Naive thymus-derived CD4-positive, alpha-beta T cell (primary cell): ENCODE measurements at regions of chr4 and their contacts with region 1.

Region 1: DNA sequence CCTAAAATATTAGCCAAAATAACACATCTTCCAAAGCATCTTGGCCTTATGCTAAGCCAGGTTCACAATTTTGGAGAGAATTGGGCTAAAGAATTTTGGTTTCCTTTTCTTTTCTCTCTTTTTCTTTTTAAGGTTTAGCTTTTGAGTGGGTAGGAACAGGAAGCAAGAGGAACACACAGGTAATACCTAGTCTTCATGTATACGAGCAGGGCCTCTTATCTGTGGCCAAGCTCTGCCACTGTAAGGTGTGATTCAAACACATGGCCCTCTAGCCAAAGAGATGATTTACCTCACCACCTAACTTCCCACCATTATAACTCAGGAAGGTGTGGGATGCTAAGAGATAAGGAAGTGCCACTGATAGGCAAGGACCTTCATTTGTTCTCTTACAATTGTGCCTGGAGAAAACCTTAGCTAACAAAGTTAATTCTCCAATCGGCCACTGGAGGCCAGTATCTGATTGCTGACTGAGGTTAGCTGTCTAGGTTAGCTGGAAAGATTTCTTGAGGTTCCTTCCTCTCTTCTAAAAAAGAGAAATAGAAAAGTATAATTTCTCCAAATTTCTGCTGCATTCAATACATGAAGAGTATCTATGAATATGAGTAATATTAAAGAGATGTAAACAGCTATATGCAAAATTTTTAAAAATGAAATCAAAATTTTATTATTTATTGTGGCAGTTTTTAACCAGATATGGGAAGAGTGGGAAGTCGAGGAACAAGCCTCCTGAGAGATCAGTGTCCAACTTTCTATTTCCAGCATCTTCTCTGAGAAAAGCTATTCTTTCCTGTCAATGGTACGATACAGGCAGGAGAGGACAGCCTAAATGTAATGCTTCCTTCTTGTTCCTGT is 30.1 kb upstream of the BBS7 start:
- DNase-seq: peak in 8 of 9 donors; percentile 33 to 59 (median 54)
- ATAC-seq: peak; percentile 87
- H3K4me3 ChIP-seq: no peak overlapping the region
- H3K4me3 Mint-ChIP-seq: no peak overlapping the region
- H3K27ac ChIP-seq: no peak overlapping the region
- H3K27ac Mint-ChIP-seq: peak overlapping the region in 6 of 9 donors; percentile 1 to 84 (median 57)
- H3K4me1 ChIP-seq: peaks cover 0 to 3% of the 10 kb centered on the region in 2 donors
- H3K4me1 Mint-ChIP-seq: peaks cover 0 to 16% (median 9%) of the 10 kb centered on the region in 7 donors
- H3K27me3 ChIP-seq: no peaks in the 10 kb centered on the region
- H3K27me3 Mint-ChIP-seq: peaks cover 11 to 24% (median 13%) of the 10 kb centered on the region in 5 donors

Region 2: GRCh38 chr4:121869841-121870656 is 30.3 kb before region 1 on chr4 and contains the start of gene BBS7:
- CTCF ChIA-PET with region 1: interaction called, 5 read pairs
- POLR2A ChIA-PET with region 1: interaction called, 3 read pairs
- intact Hi-C with region 1: loop called in 1 of 2 experiments (anchors 2 kb)
- DNase-seq: peak; percentile 79 to 93 (median 89)
- ATAC-seq: peak; percentile 98
- H3K4me3 ChIP-seq: peak within 1 kb of the TSS; percentile 99
- H3K4me3 Mint-ChIP-seq: peak within 1 kb of the TSS; percentile 88 to 98 (median 97)
- H3K27ac ChIP-seq: peak within 1 kb of the TSS; percentile 77
- H3K27ac Mint-ChIP-seq: peak within 1 kb of the TSS; percentile 69 to 95 (median 90)
- H3K4me1 ChIP-seq: peaks cover 0 to 10% of the 10 kb centered on the region in 2 donors
- H3K4me1 Mint-ChIP-seq: peaks cover 9 to 17% (median 15%) of the 10 kb centered on the region in 7 donors
- H3K27me3 ChIP-seq: no peaks in the 10 kb centered on the region
- H3K27me3 Mint-ChIP-seq: peaks cover 0 to 30% (median 12%) of the 10 kb centered on the region in 5 donors
- total RNA-seq, gene BBS7: 3.7 to 13.1 (median 8.1) TPM

Region 3: DNA sequence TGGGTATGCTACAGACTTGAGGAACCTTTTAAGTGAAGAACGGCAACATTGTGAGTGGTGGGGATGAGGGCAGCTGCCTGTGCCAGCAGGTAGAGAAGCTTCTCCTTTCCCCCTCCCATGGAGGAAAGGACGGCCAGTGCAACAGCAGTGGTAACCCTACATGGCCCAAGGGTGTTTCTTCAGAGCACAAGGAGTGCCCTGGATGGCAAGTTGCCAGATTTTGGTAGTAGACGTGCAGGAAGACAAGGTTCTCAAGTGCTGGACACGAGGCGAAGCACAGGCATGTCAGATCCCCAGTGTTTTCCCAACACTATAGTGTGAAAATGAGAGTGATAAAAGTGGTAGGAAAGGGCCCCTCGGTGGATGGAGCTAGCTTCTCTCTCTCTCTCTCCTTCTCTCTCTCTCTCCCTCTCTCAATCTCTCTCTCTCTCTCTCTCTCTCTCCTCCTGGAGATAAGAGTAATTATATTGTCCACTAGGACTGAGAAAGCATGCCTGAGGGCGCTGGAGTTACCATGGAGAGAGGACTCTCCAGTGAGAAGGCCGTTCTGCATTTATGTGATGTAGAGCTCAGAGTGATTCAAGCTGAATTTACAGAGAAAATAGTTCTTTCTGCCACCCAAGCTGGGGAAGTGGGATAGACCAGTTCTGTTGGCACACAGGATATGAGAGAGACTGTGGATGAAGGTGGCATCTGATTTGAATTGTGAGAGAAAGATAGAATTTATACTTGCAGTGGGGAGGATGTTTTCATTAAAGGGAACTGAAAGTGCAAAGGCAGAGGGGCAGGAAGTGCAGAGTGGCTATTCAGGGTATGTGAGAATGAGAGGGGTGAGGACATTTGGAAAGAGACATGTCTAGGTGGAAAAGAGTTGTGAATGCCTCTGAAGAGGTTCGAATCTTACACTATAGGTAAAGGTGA is 77.2 kb after region 1 on chr4:
- CTCF ChIA-PET with region 1: no interaction called
- POLR2A ChIA-PET with region 1: no interaction called
- intact Hi-C with region 1: no loop called
- DNase-seq: peak in 3 of 9 donors; percentile 5 to 23 (median 17)
- ATAC-seq: peak; percentile 38
- H3K4me3 ChIP-seq: no peak overlapping the region
- H3K4me3 Mint-ChIP-seq: peak overlapping the region in 4 of 10 donors; percentile 46 to 71 (median 53)
- H3K27ac ChIP-seq: no peak overlapping the region
- H3K27ac Mint-ChIP-seq: peak overlapping the region in 5 of 9 donors; percentile 46 to 84 (median 69)
- H3K4me1 ChIP-seq: peaks cover 0 to 7% of the 10 kb centered on the region in 2 donors
- H3K4me1 Mint-ChIP-seq: peaks cover 0 to 19% (median 6%) of the 10 kb centered on the region in 7 donors
- H3K27me3 ChIP-seq: no peaks in the 10 kb centered on the region
- H3K27me3 Mint-ChIP-seq: peaks cover 5 to 25% (median 11%) of the 10 kb centered on the region in 5 donors

Region 4: GRCh38 chr4:122003335-122003734 is 103.0 kb after region 1 on chr4:
- CTCF ChIA-PET with region 1: interaction called, 4 read pairs
- POLR2A ChIA-PET with region 1: no interaction called
- intact Hi-C with region 1: loop called (anchors 1 kb)
- DNase-seq: peak in 5 of 9 donors; percentile 2 to 25 (median 7)
- ATAC-seq: peak; percentile 60
- H3K4me3 ChIP-seq: no peak overlapping the region
- H3K4me3 Mint-ChIP-seq: no peak overlapping the region
- H3K27ac ChIP-seq: no peak overlapping the region
- H3K27ac Mint-ChIP-seq: no peak overlapping the region
- H3K4me1 ChIP-seq: no peaks in the 10 kb centered on the region
- H3K4me1 Mint-ChIP-seq: peaks cover 0 to 8% (median 0%) of the 10 kb centered on the region in 7 donors
- H3K27me3 ChIP-seq: peaks cover 0 to 2% of the 10 kb centered on the region in 2 donors
- H3K27me3 Mint-ChIP-seq: peaks cover 14 to 22% (median 17%) of the 10 kb centered on the region in 5 donors

Region 5: GRCh38 chr4:122224348-122224747 is 324.0 kb after region 1 on chr4:
- CTCF ChIA-PET with region 1: interaction called, 3 read pairs
- POLR2A ChIA-PET with region 1: no interaction called
- intact Hi-C with region 1: loop called in 1 of 2 experiments (anchors 1 kb)
- DNase-seq: peak in 2 of 9 donors; percentile 10 to 21
- ATAC-seq: no peak
- H3K4me3 ChIP-seq: no peak overlapping the region
- H3K4me3 Mint-ChIP-seq: no peak overlapping the region
- H3K27ac ChIP-seq: no peak overlapping the region
- H3K27ac Mint-ChIP-seq: peak overlapping the region in 1 of 9 donors; percentile 55
- H3K4me1 ChIP-seq: no peaks in the 10 kb centered on the region
- H3K4me1 Mint-ChIP-seq: peaks cover 0 to 23% (median 8%) of the 10 kb centered on the region in 7 donors
- H3K27me3 ChIP-seq: no peaks in the 10 kb centered on the region
- H3K27me3 Mint-ChIP-seq: no peaks in the 10 kb centered on the region

Region 6: DNA sequence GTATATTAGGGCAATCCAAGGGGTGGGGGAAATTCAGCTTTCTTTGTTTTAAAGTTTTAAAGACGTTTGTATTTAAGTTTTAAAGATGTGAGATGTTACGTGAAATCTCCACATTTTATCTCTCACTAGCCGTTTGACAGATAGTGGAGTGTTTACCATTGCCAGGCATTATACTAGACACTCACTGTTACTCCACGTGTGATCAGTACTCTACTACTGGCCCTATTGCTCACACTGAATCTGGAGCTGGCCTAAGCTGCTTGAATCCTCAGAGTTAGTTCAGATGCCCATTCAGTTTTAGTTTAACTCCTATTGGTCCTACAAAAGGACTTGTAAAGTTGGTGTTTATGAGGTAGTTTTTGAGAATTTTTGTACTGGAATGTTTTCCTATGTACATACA is 483.0 kb after region 1 on chr4:
- CTCF ChIA-PET with region 1: no interaction called
- POLR2A ChIA-PET with region 1: no interaction called
- intact Hi-C with region 1: no loop called
- DNase-seq: no peak
- ATAC-seq: no peak
- H3K4me3 ChIP-seq: no peak overlapping the region
- H3K4me3 Mint-ChIP-seq: no peak overlapping the region
- H3K27ac ChIP-seq: no peak overlapping the region
- H3K27ac Mint-ChIP-seq: no peak overlapping the region
- H3K4me1 ChIP-seq: no peaks in the 10 kb centered on the region
- H3K4me1 Mint-ChIP-seq: no peaks in the 10 kb centered on the region
- H3K27me3 ChIP-seq: no peaks in the 10 kb centered on the region
- H3K27me3 Mint-ChIP-seq: no peaks in the 10 kb centered on the region

Region 7: GRCh38 chr4:122652379-122652778 is 752.0 kb after region 1 on chr4:
- CTCF ChIA-PET with region 1: no interaction called
- POLR2A ChIA-PET with region 1: no interaction called
- intact Hi-C with region 1: loop called (anchors 5 kb)
- DNase-seq: peak in 6 of 9 donors; percentile 18 to 39 (median 23)
- ATAC-seq: peak; percentile 57
- H3K4me3 ChIP-seq: no peak overlapping the region
- H3K4me3 Mint-ChIP-seq: no peak overlapping the region
- H3K27ac ChIP-seq: no peak overlapping the region
- H3K27ac Mint-ChIP-seq: no peak overlapping the region
- H3K4me1 ChIP-seq: no peaks in the 10 kb centered on the region
- H3K4me1 Mint-ChIP-seq: peaks cover 0 to 12% (median 0%) of the 10 kb centered on the region in 7 donors
- H3K27me3 ChIP-seq: no peaks in the 10 kb centered on the region
- H3K27me3 Mint-ChIP-seq: no peaks in the 10 kb centered on the region

Region 8: DNA sequence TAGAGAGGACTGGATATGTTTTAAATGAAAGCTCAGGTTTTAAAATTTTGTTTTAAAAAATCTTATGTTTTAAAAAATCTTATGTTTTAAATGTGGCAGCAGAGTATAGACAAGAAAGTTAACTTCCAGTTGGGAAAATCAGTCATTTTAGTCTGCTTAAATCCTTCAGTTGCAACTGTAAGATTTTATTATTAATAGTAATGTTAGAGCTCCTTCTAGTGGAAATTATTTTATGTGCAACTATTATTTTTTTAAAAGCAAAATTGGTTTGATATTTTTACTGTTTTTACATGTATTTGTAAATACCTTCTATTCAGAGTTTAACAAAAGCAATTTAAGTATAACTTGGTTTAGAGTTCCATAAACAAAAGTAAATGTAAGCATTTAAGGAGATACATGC is 1030.5 kb after region 1 on chr4:
- CTCF ChIA-PET with region 1: no interaction called
- POLR2A ChIA-PET with region 1: no interaction called
- intact Hi-C with region 1: loop called (anchors 2 kb)
- DNase-seq: peak in 3 of 9 donors; percentile 6 to 17 (median 14)
- ATAC-seq: no peak
- H3K4me3 ChIP-seq: no peak overlapping the region
- H3K4me3 Mint-ChIP-seq: no peak overlapping the region
- H3K27ac ChIP-seq: no peak overlapping the region
- H3K27ac Mint-ChIP-seq: no peak overlapping the region
- H3K4me1 ChIP-seq: no peaks in the 10 kb centered on the region
- H3K4me1 Mint-ChIP-seq: peaks cover 0 to 36% (median 7%) of the 10 kb centered on the region in 7 donors
- H3K27me3 ChIP-seq: no peaks in the 10 kb centered on the region
- H3K27me3 Mint-ChIP-seq: no peaks in the 10 kb centered on the region